ENCODE measurements at regions of chr4 and their contacts with region 1.

Region 1: GRCh38 chr4:184544788-184545409 is 70.5 kb upstream of the IRF2 start:
- DNase-seq: no peak
- H3K4me3 ChIP-seq: no peak overlapping the region
- H3K27ac ChIP-seq: no peak overlapping the region
- H3K4me1 ChIP-seq: no peaks in the 10 kb centered on the region
- H3K27me3 ChIP-seq: no peaks in the 10 kb centered on the region
- CTCF ChIP-seq: no peak
- POLR2A ChIP-seq: no peak

Region 2: GRCh38 chr4:184255361-184255760 is 289.5 kb before region 1 on chr4:
- intact Hi-C with region 1: loop called in 1 of 2 experiments (anchors 5 kb)
- DNase-seq: no peak
- H3K4me3 ChIP-seq: no peak overlapping the region
- H3K27ac ChIP-seq: no peak overlapping the region
- H3K4me1 ChIP-seq: no peaks in the 10 kb centered on the region
- H3K27me3 ChIP-seq: no peaks in the 10 kb centered on the region
- CTCF ChIP-seq: no peak
- POLR2A ChIP-seq: no peak

Region 3: GRCh38 chr4:184907216-184907615 is 362.3 kb after region 1 on chr4:
- intact Hi-C with region 1: no loop called
- DNase-seq: no peak
- H3K4me3 ChIP-seq: no peak overlapping the region
- H3K27ac ChIP-seq: no peak overlapping the region
- H3K4me1 ChIP-seq: no peaks in the 10 kb centered on the region
- H3K27me3 ChIP-seq: no peaks in the 10 kb centered on the region
- CTCF ChIP-seq: no peak
- POLR2A ChIP-seq: no peak

Measured in adrenal gland (tissue), 19 donors.